Sciatic nerve (tissue), 2 donors: ENCODE measurements at regions of chr16 and their contacts with region 1.

Region 1: DNA sequence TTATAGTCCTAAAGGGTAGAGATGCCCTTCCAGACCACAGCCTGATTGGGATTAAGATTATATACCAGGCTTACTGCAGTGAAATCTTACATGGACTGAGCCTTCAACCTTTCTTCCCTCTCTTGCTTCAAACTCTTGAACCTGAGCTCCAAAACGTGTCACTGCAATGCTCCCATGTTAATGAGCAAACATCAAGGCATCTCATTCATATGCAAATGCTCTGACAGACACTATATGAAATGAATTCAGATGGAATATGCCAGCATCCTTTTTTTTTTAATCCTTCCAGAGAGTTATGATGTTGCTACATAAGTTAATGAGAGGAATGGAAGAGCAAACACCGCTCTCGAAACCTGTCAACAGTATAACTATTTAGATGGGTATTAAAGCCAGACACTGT is 611.9 kb upstream of the CDH11 start:
- DNase-seq: no peak
- ATAC-seq: no peak

Region 2: DNA sequence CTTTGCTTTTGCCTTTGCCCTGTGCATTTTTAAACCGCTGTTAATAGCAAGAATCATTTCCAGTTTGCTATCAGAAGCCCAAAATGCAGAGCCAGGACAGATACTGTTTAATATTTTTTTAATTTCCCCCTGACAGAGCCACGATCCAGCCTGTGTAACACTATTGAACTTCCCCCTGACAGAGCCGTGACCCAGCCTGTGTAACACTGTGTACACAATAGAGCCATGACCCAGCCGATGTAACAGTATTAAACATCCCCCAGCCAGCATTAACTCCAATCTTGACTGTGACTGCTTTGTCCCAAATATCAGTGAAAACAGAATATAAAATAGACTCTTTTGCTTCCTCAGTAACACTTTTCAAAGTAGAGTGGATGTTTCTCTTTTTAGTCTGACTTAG is 24.9 kb after region 1 on chr16:
- intact Hi-C with region 1: loop called (anchors 1 kb)
- DNase-seq: no peak
- ATAC-seq: no peak

Region 3: DNA sequence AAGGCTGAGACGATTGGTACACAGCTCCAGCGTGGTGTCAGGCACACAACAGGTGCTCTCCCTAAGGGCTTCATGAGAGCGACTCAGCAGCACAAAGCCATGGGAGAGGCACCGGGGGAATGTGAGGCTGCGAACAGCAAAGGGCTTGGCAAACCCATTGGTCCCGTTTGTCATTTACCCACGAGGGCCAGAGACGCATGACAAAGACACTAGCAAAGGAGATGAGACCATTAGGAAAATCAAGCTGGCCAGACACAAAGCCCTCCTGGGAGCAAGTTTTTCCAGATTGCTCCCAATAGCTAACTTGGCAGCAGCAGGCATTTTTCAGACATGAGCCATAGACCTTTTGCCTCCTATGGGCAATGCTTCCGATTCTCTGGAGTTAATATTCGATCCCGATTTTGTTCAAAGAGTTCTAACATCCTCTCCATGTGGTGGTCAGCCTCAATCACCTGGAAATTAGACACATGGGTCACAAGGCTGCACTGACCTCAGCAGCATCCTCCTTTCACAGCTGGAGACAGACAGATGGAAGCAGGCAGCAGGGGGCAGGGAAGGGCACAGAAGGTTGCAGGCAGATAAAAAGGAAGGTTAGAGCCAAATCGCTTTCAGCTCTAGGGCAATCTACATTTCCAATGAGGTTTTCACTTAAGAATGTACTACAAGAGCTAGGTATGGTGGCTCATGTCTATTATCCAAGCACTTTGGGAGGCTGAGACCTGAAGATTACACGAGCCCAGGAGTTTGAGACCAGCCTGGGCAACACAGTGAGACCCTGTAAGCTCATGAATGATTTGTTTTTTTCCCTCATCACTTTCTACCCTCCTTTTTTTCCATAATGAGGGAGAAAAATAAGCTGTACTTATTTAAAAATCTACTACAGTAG is 778.1 kb after region 1 on chr16:
- intact Hi-C with region 1: no loop called
- DNase-seq: peak; percentile 59
- ATAC-seq: peak; percentile 4